Activated naive CD4-positive, alpha-beta T cell treated with anti-CD3 and anti-CD28 coated beads for 36 hours (primary cell): ENCODE measurements at regions of chr6 and their contacts with region 1.

Region 1: GRCh38 chr6:25788305-25788922 is 33.9 kb downstream of the SLC17A4 start:
- DNase-seq: peak; percentile 73
- H3K4me3 Mint-ChIP-seq: no peak overlapping the region
- H3K27ac Mint-ChIP-seq: no peak overlapping the region
- H3K4me1 Mint-ChIP-seq: no peaks in the 10 kb centered on the region
- H3K27me3 Mint-ChIP-seq: no peaks in the 10 kb centered on the region

Region 2: DNA sequence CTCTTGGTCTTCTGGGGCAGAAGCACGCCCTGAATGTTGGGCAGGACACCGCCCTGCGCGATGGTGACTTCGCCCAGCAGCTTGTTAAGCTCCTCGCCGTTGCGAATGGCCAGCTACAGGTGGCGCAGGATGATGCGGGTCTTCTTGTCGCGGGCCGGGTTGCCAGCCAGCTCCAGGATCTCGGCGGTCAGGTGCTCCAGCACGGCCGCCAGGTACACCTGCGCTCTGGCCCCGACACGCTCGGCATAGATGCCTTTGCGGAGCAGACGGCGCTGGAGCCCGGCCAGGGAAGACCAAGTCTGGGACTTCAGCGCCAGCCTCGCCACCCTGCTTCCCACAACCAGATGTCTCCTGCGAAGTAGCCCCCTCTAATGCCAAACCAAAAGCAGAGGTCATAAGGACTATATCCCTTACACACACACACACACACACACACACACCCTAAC is 93.7 kb after region 1 on chr6:
- CTCF ChIA-PET with region 1: interaction called, 3 read pairs
- intact Hi-C with region 1: loop called (anchors 2 kb)
- DNase-seq: peak; percentile 49
- H3K4me3 Mint-ChIP-seq: peak overlapping the region; percentile 72
- H3K27ac Mint-ChIP-seq: no peak overlapping the region
- H3K4me1 Mint-ChIP-seq: no peaks in the 10 kb centered on the region
- H3K27me3 Mint-ChIP-seq: no peaks in the 10 kb centered on the region

Region 3: DNA sequence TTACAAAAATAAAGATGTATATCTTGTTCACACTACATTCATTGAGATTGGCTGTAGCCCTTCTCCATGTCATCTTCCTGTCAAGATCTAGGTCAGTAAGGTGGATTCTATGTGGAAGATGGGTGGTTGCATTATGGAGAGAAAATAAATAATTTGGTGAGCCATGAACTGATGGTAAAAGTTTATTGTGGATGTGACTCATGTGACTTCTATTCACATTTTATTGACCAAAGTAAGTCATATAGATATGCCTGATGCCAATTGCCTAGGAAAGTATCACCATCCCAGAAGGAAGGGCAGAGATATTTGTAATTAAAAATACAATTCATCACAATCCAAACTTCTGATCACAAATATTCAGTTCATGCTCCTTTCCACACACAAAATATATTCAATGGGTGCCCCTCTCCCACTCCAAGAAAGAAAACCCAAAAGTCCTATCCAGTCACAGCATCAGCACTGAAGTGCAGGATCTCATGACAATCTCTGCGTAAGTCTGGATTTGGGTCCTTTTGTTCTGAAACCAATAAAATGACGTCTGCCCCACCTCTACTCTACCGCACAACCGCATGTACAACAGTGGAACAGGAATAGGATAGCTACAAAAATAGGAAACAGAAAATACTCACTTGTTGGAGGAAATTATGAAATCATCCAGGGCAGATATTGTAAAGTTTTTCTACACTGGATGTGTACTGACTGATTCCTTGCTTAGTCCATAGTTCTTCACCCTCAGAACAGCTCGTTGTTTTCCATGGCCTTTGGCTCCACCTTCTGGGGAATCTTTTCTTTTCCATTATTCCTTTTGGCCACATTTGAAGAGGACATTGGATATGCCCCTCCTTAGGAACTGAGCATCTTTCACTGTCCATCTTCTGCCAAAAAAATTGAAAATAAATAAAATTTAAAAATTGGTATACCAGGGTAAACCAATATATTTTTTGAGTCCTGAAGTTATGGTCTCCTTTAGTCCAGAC is 101.8 kb after region 1 on chr6:
- CTCF ChIA-PET with region 1: interaction called, 4 read pairs
- intact Hi-C with region 1: loop called (anchors 2 kb)
- DNase-seq: peak; percentile 33
- H3K4me3 Mint-ChIP-seq: no peak overlapping the region
- H3K27ac Mint-ChIP-seq: no peak overlapping the region
- H3K4me1 Mint-ChIP-seq: no peaks in the 10 kb centered on the region
- H3K27me3 Mint-ChIP-seq: peaks cover 2% of the 10 kb centered on the region

Region 4: DNA sequence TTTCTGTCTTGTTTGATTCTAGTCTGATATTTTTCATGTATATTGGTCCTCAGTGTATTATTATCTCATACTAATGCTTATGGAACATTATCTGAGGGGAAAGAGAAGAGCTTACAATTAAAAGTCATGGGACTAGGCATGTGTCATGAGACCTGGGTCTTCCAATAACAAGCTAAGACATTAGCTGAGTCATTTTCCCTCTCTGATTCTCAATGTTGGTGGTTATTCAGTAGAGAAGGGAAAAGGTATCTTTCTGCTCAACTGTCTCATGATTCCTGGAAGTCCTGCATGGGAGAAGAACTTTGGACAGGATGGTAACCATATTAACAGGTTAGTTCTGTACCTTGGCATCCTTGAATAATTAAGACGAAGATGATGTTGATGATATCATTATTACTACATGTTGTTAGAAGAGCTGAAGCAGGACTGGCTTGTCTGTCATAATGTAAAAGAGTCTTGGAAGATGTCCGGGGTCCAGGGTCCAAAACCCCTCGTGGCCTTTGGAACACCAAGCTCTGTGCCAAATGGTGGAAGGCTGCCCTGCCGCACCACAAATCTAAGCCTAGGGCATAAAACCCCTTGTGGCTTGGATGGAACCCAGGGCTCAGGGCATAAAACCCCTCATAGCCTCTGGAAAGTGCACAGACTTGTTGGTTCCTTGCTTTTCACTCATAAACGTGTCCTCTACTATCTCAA is 193.3 kb after region 1 on chr6:
- CTCF ChIA-PET with region 1: no interaction called
- intact Hi-C with region 1: no loop called
- DNase-seq: no peak
- H3K4me3 Mint-ChIP-seq: no peak overlapping the region
- H3K27ac Mint-ChIP-seq: peak overlapping the region; percentile 17
- H3K4me1 Mint-ChIP-seq: peaks cover 23% of the 10 kb centered on the region
- H3K27me3 Mint-ChIP-seq: no peaks in the 10 kb centered on the region

Region 5: GRCh38 chr6:26003102-26003694 is 214.8 kb after region 1 on chr6:
- CTCF ChIA-PET with region 1: interaction called, 14 read pairs
- intact Hi-C with region 1: no loop called
- DNase-seq: peak; percentile 63
- H3K4me3 Mint-ChIP-seq: no peak overlapping the region
- H3K27ac Mint-ChIP-seq: no peak overlapping the region
- H3K4me1 Mint-ChIP-seq: peaks cover 3% of the 10 kb centered on the region
- H3K27me3 Mint-ChIP-seq: no peaks in the 10 kb centered on the region